Endothelial cell of umbilical vein (primary cell): ENCODE measurements at regions of chr15 and their contacts with region 1.

Region 1: GRCh38 chr15:71853543-71853942 is 43.2 kb downstream of the NR2E3 start:
- DNase-seq: no peak
- H3K4me3 ChIP-seq: no peak overlapping the region
- H3K27ac ChIP-seq: no peak overlapping the region
- H3K4me1 ChIP-seq: no peaks in the 10 kb centered on the region
- H3K27me3 ChIP-seq: no peaks in the 10 kb centered on the region
- CTCF ChIP-seq: no peak
- POLR2A ChIP-seq: no peak

Region 2: GRCh38 chr15:71611551-71612396 is 241.8 kb before region 1 on chr15:
- CTCF ChIA-PET with region 1: no interaction called
- POLR2A ChIA-PET with region 1: no interaction called
- dilution Hi-C with region 1: no loop called
- intact Hi-C with region 1: no loop called
- DNase-seq: no peak
- H3K4me3 ChIP-seq: no peak overlapping the region
- H3K27ac ChIP-seq: no peak overlapping the region
- H3K4me1 ChIP-seq: no peaks in the 10 kb centered on the region
- H3K27me3 ChIP-seq: no peaks in the 10 kb centered on the region
- CTCF ChIP-seq: no peak
- POLR2A ChIP-seq: no peak

Region 3: DNA sequence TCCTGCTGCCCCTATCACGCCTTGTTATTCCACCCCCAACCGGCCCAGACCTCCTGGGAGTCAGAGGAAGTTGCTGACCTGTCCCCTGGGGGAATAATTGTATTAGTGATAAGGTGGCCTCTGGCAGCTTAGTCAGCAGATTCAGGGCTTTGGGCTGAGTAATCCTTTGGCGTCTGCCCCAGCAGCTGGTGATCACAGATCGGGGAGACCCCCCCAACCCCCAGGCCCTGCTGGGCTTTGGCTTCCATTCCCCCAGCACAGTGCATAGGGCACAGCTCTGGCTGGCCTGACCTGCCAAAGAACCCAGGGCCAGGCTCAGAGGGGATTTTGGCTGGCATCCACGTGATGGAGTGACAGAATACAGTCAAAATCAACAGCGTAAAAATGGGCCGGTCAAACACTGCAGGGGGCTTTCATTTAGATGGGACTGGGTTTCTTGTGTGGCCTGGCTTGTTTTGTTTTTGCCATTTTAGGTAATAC is 47.1 kb before region 1 on chr15:
- CTCF ChIA-PET with region 1: interaction called, 12 read pairs
- POLR2A ChIA-PET with region 1: no interaction called
- dilution Hi-C with region 1: no loop called
- intact Hi-C with region 1: no loop called
- DNase-seq: peak; percentile 42
- H3K4me3 ChIP-seq: no peak overlapping the region
- H3K27ac ChIP-seq: no peak overlapping the region
- H3K4me1 ChIP-seq: peaks cover 14% of the 10 kb centered on the region
- H3K27me3 ChIP-seq: no peaks in the 10 kb centered on the region
- CTCF ChIP-seq: no peak
- POLR2A ChIP-seq: no peak

Region 4: GRCh38 chr15:71841563-71841962 is 12.0 kb before region 1 on chr15:
- CTCF ChIA-PET with region 1: interaction called, 10 read pairs
- POLR2A ChIA-PET with region 1: no interaction called
- dilution Hi-C with region 1: no loop called
- intact Hi-C with region 1: no loop called
- DNase-seq: no peak
- H3K4me3 ChIP-seq: no peak overlapping the region
- H3K27ac ChIP-seq: no peak overlapping the region
- H3K4me1 ChIP-seq: peaks cover 27% of the 10 kb centered on the region
- H3K27me3 ChIP-seq: no peaks in the 10 kb centered on the region
- CTCF ChIP-seq: no peak
- POLR2A ChIP-seq: no peak

Region 5: DNA sequence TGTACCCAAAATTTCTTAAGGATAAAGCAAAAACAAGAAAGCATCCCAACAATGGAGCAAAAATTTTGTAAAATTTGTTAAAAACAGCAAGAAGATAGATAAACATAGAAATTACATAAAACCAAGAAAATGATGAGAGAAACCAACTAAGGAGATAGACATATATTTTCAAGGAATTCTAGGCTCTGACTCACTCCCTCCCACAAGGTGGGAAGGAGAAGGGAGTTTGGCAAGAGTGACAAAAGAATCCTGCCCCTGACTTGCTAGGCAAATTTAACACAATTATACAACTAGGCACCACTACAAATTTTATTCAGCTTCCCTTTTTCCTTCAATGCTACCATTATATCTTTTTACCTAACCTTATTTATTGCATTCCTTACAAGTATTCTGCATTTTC is 193.5 kb after region 1 on chr15:
- CTCF ChIA-PET with region 1: no interaction called
- POLR2A ChIA-PET with region 1: no interaction called
- dilution Hi-C with region 1: no loop called
- intact Hi-C with region 1: no loop called
- DNase-seq: no peak
- H3K4me3 ChIP-seq: no peak overlapping the region
- H3K27ac ChIP-seq: no peak overlapping the region
- H3K4me1 ChIP-seq: no peaks in the 10 kb centered on the region
- H3K27me3 ChIP-seq: no peaks in the 10 kb centered on the region
- CTCF ChIP-seq: no peak
- POLR2A ChIP-seq: no peak